ENCODE measurements at regions of chr1 and their contacts with region 1.

Region 1: DNA sequence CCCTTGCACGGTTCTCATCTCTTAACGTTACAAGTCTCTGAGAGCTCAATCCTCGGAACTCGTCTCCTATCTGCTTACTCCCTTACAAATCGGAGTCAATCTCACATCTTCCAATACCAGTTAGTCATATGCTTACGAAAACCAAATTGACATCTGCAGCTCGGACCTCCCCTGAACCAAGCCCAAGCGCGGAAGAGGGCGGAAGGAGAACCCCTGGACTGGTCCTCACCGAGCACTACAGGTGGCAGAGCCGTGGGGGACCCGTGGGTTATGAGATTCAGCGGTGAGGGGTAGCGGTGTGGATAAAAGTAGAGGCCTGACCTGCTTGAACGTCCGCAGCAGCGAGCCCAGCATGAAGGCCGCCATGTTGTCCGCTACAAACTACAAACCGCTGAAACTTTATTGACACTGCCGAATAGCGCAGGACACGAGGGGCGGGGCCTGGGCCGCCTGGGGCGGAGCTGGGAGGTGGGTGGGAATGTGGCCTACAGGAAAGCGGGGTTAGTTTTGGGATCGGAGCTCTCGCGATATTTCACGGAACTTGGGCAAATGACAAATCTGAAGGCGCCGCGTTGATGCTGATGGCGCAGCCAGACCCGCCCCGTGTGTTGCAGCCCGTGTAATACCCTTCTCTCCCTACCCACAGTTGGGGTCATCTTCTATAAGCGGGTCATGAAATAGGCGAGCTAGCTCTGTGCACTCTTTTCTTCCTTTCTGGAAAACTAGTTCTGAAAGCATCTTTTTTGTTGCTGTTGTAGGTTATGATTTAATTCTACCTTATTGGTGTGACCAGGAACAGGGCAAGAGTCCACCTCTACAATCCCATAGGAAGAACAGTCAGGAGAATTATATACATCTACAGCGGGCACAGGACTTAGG is at the start of gene MRPS14:
- DNase-seq: peak; percentile 99
- H3K4me3 Mint-ChIP-seq: peak within 1 kb of the TSS; percentile 83
- H3K27ac Mint-ChIP-seq: peak within 1 kb of the TSS; percentile 87
- H3K4me1 Mint-ChIP-seq: peaks cover 33% of the 10 kb centered on the region
- H3K27me3 Mint-ChIP-seq: no peaks in the 10 kb centered on the region

Region 2: GRCh38 chr1:174999216-174999925 is 23.9 kb before region 1 on chr1:
- CTCF ChIA-PET with region 1: interaction called, 13 read pairs
- DNase-seq: peak; percentile 97
- H3K4me3 Mint-ChIP-seq: no peak overlapping the region
- H3K27ac Mint-ChIP-seq: no peak overlapping the region
- H3K4me1 Mint-ChIP-seq: peaks cover 48% of the 10 kb centered on the region
- H3K27me3 Mint-ChIP-seq: no peaks in the 10 kb centered on the region

Measured in activated naive CD4-positive, alpha-beta T cell treated with anti-CD3 and anti-CD28 coated beads, Interleukin-2, amount 10 ng/mL, durations not matched to agents 7 days and 5 days (primary cell).